ENCODE measurements at regions of chr1 and their contacts with region 1.

Region 1: GRCh38 chr1:11059990-11060830 is at the start of gene SRM:
- DNase-seq: peak; percentile 97

Region 2: DNA sequence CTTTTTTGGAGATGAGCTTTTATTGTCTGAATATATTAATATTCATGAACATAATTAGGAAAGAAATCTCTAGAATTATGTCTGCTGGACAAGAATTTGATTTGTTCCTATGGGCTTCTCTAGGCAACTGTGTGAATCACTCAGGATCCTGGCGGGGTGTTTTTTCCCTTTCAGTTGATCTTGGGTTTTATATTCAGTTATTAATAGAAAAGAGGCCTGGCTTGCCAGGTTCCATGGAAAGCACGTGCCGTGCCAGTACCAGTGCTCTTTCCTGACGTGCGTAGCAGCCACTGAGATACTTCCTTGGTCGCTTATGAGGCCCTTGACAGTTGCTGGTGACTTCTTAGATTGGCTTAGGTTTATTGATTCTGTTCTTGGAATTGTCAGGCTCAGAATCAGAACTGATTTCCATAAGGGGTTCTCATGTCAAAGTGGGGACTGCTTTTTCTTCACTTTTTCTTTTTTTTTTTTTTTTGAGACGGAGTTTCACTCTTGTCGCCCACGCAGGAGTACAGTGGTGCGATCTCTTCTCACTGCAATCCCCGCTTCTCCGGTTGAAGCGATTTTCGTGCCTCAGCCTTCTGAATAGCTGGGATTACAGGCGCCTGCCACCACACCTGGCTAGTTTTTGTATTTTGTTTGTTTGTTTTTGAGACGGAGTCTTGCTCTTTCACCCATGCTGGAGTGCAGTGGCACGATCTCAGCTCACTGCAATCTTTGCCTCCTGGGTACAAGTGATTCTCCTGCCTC is 898.5 kb before region 1 on chr1:
- CTCF ChIA-PET with region 1: no interaction called
- POLR2A ChIA-PET with region 1: no interaction called
- DNase-seq: no peak

Region 3: DNA sequence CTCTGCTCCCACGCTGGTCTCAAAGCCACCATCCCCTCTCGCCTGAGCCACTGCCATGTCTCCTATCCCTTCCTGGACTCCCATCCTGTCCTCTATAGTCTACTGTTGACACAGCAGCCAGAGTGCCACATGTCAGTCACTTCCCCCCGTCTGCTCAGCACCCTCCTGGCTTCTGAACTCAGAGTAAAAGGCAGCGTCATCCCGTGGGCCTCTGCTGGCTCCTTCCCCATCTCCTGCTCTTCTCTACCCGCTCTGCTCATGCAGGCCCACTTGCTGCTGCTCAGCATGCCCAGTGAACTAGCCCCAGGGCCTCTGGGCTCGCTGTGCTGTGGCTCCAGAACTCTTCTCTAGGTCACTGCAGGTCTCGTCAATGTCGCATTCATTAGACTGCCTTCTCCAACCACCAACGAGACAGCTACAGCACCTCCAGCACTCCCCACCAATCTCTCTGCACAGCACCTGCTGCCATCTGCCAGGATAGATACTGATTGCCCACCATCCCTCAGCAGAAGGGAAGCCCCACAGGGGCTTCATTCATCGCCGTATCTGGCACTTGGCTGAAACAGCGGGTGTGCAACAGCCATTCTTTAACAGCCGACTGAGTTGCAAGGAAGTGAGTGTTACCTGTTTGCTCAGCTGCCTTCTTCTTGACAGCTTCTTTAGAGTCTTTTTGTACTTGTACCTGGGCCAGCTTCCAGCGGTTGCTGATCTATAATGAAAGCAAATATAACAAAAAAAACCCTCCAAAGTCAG is 11.4 kb after region 1 on chr1:
- CTCF ChIA-PET with region 1: no interaction called
- POLR2A ChIA-PET with region 1: interaction called, 10 read pairs
- DNase-seq: no peak

Region 4: DNA sequence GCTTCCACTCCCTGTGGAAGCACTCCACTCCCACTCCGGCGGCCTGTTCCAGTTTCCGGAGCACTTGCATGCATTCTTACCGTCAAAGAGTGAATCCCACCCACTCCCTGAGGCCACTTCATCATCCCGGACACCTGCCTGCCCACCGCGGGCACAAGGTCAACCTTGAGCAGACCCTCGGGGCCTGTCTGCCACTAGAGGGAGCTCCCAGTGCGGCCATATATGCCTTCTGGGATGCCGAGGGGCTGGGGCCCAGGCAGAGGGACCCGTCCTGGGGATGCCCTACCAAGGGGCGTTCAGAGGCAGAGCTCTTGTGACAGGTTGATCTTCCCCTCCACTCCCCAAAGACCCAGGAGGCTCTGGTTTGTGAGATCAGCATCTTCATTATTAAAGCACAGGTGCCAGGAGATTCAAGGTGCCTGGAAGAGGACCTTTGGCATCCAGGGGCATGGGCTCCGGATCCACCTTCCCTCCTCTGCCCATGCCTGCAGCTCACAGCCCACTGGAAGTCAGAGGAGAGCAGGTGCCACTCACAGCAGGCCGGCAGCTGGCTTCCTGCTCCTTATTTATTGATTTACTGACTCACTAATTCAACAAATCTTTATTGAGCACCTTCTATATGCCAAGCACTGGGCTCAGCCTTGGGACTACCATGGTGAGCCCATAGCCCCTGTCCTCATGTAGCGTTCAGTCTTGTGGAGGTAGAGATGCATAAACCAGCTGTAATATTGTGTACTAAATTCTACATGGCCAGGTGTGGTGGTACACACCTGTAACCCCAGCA is 260.1 kb after region 1 on chr1:
- CTCF ChIA-PET with region 1: no interaction called
- POLR2A ChIA-PET with region 1: no interaction called
- DNase-seq: peak; percentile 70

Measured in HEK293T (cell line).